ENCODE measurements at regions of chr4 and their contacts with region 1.

Region 1: DNA sequence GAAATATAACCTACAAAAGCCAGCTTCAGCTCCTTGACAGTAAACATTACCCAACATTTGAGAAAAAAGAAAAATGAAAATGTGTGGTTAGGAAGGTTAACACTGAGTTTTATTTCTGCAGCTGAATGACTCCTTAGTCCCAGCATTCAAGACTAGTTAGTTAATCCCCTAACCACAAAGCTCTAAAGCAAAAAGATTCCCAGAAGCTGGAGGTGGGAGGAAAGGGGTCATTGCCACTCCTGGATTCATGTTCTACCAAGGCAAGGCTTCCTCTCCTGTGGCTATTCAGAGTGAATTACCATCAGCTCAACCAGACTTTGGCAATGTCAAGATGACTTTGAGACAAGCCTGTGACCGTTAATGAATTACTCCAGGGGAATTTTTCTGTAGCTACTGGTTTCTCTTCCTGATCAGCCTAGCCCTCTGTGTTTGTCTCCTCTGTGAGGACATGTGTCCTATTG is 63.6 kb downstream of the HADH start:
- DNase-seq: no peak
- ATAC-seq: no peak
- H3K4me3 Mint-ChIP-seq: no peak overlapping the region
- H3K27ac Mint-ChIP-seq: peak overlapping the region; percentile 76
- H3K4me1 Mint-ChIP-seq: peaks cover 79% of the 10 kb centered on the region
- H3K27me3 Mint-ChIP-seq: no peaks in the 10 kb centered on the region

Region 2: GRCh38 chr4:108068442-108068841 is 15.2 kb after region 1 on chr4:
- CTCF ChIA-PET with region 1: interaction called, 15 read pairs
- POLR2A ChIA-PET with region 1: interaction called, 11 read pairs
- DNase-seq: no peak
- ATAC-seq: no peak
- H3K4me3 Mint-ChIP-seq: no peak overlapping the region
- H3K27ac Mint-ChIP-seq: peak overlapping the region; percentile 66
- H3K4me1 Mint-ChIP-seq: peaks cover 61% of the 10 kb centered on the region
- H3K27me3 Mint-ChIP-seq: no peaks in the 10 kb centered on the region

Region 3: DNA sequence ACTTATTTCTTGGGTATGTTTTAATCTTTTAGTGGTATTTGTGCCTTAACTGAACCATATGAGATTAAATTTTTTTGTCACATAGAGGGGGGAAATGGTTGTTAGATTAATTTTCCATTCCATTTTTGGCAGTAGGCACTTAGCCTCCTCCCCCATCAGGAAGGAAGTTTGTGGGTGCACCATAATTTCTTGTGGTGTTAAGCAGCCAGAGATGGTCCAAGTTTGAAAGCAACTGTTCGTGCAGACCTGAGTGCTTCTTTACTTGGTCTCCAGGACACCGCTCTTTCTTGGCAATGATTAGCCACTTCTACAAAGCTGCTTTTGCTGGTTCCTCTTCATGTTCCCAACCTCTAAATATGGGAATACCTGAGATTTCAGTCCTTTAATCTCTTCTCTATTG is 474.4 kb after region 1 on chr4:
- CTCF ChIA-PET with region 1: no interaction called
- POLR2A ChIA-PET with region 1: no interaction called
- DNase-seq: peak; percentile 75
- ATAC-seq: peak; percentile 89
- H3K4me3 Mint-ChIP-seq: peak overlapping the region; percentile 29
- H3K27ac Mint-ChIP-seq: peak overlapping the region; percentile 83
- H3K4me1 Mint-ChIP-seq: peaks cover 75% of the 10 kb centered on the region
- H3K27me3 Mint-ChIP-seq: no peaks in the 10 kb centered on the region